CD8-positive, alpha-beta T cell (primary cell): ENCODE measurements at regions of chr9 and their contacts with region 1.

Region 1: DNA sequence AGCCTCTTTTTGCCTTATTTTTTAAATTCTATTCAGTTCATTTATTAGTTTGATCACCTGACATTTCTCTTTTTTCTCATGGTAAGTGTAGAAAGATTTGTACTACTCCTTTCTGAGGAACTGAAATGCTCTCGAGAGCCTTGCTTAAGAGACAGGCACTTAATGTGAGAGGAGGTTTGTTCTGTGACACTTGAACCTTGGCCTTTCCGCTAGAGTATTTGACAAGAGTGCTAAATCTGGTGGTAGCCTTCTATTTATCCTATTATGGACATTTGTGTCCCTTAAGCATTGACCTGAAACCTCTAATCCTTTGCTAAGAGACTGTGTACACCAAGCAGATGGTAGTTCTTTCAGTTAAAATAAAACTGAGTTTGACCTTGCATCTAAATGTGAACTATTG is 805.0 kb upstream of the PTPRD start:
- DNase-seq: no peak
- ATAC-seq: no peak
- H3K4me3 ChIP-seq: no peak overlapping the region
- H3K4me3 Mint-ChIP-seq: no peak overlapping the region
- H3K27ac ChIP-seq: no peak overlapping the region
- H3K27ac Mint-ChIP-seq: no peak overlapping the region
- H3K4me1 ChIP-seq: no peaks in the 10 kb centered on the region
- H3K4me1 Mint-ChIP-seq: no peaks in the 10 kb centered on the region
- H3K27me3 ChIP-seq: no peaks in the 10 kb centered on the region
- H3K27me3 Mint-ChIP-seq: no peaks in the 10 kb centered on the region
- CTCF ChIP-seq: no peak

Region 2: GRCh38 chr9:10661376-10661775 is 756.4 kb before region 1 on chr9:
- CTCF ChIA-PET with region 1: no interaction called
- POLR2A ChIA-PET with region 1: no interaction called
- intact Hi-C with region 1: no loop called
- DNase-seq: no peak
- ATAC-seq: no peak
- H3K4me3 ChIP-seq: no peak overlapping the region
- H3K4me3 Mint-ChIP-seq: no peak overlapping the region
- H3K27ac ChIP-seq: no peak overlapping the region
- H3K27ac Mint-ChIP-seq: no peak overlapping the region
- H3K4me1 ChIP-seq: no peaks in the 10 kb centered on the region
- H3K4me1 Mint-ChIP-seq: no peaks in the 10 kb centered on the region
- H3K27me3 ChIP-seq: no peaks in the 10 kb centered on the region
- H3K27me3 Mint-ChIP-seq: no peaks in the 10 kb centered on the region
- CTCF ChIP-seq: no peak

Region 3: DNA sequence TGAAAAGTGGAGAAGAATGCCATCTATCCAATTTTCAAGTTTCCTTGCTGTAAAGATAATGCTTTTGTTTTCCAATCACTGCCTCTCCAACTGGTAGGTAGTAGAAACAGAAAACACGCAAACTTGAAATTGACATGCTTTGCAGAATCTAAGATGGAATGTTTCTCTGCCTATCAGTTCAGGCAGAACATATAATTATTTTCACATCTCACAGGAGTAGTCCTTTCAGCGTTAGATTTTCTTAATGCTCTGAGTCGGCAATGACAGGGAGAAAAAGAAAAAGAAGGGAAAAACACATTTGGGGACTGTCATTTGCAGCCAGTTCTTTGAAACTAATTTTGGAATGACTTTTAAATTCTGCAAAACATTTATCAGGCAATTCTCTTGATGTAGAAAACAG is 13.7 kb after region 1 on chr9:
- CTCF ChIA-PET with region 1: no interaction called
- POLR2A ChIA-PET with region 1: no interaction called
- intact Hi-C with region 1: loop called in 1 of 2 experiments (anchors 2 kb)
- DNase-seq: no peak
- ATAC-seq: no peak
- H3K4me3 ChIP-seq: no peak overlapping the region
- H3K4me3 Mint-ChIP-seq: no peak overlapping the region
- H3K27ac ChIP-seq: no peak overlapping the region
- H3K27ac Mint-ChIP-seq: no peak overlapping the region
- H3K4me1 ChIP-seq: no peaks in the 10 kb centered on the region
- H3K4me1 Mint-ChIP-seq: no peaks in the 10 kb centered on the region
- H3K27me3 ChIP-seq: no peaks in the 10 kb centered on the region
- H3K27me3 Mint-ChIP-seq: no peaks in the 10 kb centered on the region
- CTCF ChIP-seq: no peak

Region 4: DNA sequence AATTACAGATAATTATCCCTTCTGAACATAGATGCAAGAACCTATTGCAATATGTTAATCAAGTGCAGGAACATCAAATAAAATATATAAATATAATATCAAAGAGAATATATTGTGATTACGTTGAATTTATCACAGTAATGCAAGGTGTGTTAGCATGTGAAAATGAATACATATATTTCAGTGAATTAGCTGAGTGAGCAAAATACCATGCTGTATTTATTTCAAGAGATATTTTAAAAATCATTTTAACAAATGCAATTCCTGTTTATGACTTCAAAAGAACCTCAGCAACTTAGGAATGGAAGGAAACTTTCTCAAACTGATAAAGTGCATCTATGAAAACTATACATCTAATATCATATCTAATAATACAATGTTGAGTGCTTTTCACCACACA is 52.0 kb after region 1 on chr9:
- CTCF ChIA-PET with region 1: no interaction called
- POLR2A ChIA-PET with region 1: no interaction called
- intact Hi-C with region 1: loop called in 1 of 2 experiments (anchors 5 kb)
- DNase-seq: no peak
- ATAC-seq: no peak
- H3K4me3 ChIP-seq: no peak overlapping the region
- H3K4me3 Mint-ChIP-seq: no peak overlapping the region
- H3K27ac ChIP-seq: no peak overlapping the region
- H3K27ac Mint-ChIP-seq: no peak overlapping the region
- H3K4me1 ChIP-seq: no peaks in the 10 kb centered on the region
- H3K4me1 Mint-ChIP-seq: no peaks in the 10 kb centered on the region
- H3K27me3 ChIP-seq: no peaks in the 10 kb centered on the region
- H3K27me3 Mint-ChIP-seq: no peaks in the 10 kb centered on the region
- CTCF ChIP-seq: no peak

Region 5: DNA sequence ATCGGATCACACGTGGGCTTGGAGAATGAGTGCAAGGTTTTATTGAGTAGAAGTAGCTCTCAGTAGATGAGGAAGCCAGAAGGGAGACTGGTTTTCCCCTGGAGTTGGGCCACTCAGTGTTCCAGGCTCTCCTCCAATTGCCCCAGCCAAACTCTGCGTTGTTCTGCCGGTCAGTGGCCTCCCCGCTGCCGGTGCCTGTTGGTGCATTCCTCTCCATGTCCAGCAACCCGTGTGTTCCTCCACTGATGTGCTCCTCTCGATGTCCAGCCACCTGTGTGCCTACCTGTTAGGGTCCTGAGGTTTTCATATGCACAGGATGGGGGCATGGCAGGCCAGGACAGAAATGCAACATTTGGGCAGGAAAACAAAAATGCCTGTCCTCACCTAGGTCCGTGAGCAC is 83.0 kb after region 1 on chr9:
- CTCF ChIA-PET with region 1: no interaction called
- POLR2A ChIA-PET with region 1: no interaction called
- intact Hi-C with region 1: no loop called
- DNase-seq: no peak
- ATAC-seq: no peak
- H3K4me3 ChIP-seq: no peak overlapping the region
- H3K4me3 Mint-ChIP-seq: no peak overlapping the region
- H3K27ac ChIP-seq: no peak overlapping the region
- H3K27ac Mint-ChIP-seq: no peak overlapping the region
- H3K4me1 ChIP-seq: no peaks in the 10 kb centered on the region
- H3K4me1 Mint-ChIP-seq: no peaks in the 10 kb centered on the region
- H3K27me3 ChIP-seq: no peaks in the 10 kb centered on the region
- H3K27me3 Mint-ChIP-seq: no peaks in the 10 kb centered on the region
- CTCF ChIP-seq: no peak